ENCODE measurements at regions of chr3 and their contacts with region 1.

Region 1: DNA sequence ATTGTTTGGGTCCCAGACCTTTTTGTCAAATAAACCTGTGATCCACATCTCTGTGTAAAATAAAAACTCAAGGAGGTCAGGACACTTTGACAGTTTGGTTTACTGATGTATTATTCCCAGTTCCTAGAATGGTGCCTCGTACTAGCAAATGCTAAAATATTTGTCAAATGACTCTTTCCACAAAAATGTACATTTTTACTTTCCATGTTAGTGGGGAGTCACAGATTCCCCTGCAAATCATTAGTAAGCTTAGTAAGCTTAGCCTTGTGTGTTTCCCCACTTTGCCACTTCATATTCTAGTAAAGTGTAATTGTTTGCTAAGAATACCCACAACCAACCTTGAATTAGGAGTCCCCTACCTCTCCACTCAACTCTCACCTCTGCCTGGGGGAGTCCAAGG is 2.4 kb upstream of the MAGI1 start:
- DNase-seq: peak; percentile 44
- H3K4me3 ChIP-seq: no peak overlapping the region
- CTCF ChIP-seq: no peak

Region 2: GRCh38 chr3:66076861-66077470 is 35.9 kb after region 1 on chr3:
- in situ Hi-C with region 1: no loop called
- DNase-seq: no peak
- H3K4me3 ChIP-seq: no peak overlapping the region
- CTCF ChIP-seq: no peak

Region 3: DNA sequence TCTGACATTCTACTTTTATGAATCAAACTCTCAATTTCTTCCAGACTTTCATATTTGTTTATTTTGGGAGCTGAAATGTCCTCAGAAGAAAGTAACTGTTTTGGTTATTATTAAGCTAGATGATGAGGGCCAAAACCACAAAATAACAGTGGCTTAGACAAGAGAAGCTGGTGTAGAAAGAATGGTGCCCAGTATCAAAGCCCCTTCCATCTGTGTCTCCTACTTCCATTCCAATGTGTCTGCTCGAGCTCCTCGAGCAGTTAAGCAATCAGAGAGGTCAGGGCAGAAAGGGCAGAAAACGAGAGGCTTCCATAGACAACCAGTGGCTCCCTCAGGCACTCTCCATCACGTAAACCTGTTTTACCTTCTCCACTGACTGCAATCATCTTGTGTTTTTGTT is 57.3 kb after region 1 on chr3:
- in situ Hi-C with region 1: loop called (anchors 5 kb)
- DNase-seq: peak; percentile 44
- H3K4me3 ChIP-seq: no peak overlapping the region
- CTCF ChIP-seq: no peak

Region 4: DNA sequence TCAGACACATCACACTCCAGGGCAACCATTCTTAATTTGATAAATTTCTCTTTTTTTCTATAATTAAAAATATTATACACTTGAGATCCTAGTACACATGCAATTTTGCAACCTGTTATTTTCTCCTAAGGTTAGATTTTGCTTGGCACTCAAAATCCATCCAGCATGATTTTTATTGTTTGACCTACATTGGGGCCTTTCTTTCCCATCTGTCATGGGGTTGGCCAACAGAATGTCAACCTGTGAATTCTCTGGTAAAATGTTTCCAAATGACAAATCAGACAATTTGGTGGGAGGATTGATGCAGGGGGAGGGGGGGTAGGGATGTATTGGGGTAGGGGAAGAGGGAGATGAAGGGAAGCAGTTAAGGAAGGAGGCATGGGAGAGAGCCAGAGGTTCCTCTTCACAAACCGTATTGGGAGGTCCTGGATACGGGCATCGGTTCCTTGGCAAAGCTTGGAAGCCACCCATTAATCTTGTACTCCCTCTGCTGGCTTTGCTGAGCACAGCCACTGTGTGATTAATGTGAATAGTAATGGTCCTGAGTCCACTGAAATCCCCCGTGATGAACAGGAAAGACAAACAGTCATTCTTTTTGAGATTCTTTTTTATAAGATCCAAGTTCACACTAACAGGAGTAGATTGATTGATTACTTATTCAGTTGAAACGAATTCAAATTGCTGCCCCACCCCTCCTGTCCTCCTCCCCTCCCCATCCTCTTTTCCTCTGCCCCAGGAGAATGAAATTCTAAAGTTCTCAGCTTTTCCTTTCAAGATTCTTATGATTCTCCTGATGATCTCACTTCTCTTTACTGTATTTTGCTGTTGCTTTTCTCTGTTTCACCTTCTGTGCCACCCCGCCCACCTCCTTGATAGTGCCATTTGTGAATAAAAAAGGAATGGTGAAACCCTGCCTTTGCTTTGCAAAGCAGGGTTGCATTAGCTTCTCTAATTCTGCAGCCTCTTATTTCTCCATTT is 97.5 kb after region 1 on chr3:
- in situ Hi-C with region 1: loop called (anchors 5 kb)
- DNase-seq: peak; percentile 47
- H3K4me3 ChIP-seq: no peak overlapping the region
- CTCF ChIP-seq: peak; percentile 85